ENCODE measurements at regions of chr6 and their contacts with region 1.

Region 1: DNA sequence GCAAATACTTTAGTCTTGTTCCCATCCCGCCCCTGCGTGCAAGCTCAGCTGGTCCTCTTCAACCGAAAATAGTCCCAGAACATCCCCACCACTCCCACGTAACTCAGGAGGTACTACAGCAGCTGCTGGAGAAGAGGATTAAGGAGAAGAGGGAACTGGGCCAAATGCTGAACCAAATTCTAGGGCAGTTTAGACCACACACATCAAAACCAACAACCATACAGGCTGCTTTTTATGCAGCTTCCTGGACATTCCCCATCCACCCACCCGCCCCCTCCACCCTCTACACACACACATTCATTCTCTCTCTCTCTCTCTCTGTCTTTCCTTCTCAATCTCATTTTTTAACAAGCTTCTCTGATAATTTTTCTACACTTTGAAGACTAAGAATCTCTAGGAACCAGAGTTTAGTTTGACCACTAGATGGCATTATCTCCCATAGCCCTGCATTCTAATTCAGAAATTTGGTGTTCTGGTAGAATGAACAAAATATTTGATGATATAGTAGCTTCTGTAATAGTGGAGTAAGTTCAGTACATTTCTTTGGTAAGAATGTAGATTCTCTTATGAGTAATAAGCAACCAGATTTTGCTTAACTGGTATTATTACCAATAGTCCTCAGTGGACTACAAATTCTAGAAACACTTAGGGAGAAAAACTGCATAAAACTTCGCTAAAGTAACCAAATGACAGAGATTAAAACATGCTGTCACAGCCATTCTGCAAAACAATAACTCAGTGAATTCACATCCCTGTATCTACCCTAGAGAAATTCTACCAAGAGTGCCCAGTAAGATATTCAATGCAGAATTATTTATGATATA is 52.1 kb upstream of the BEND6 start:
- DNase-seq: no peak
- H3K4me3 ChIP-seq: peak overlapping the region in 2 of 4 donors; percentile 16 to 26
- H3K27ac ChIP-seq: peak overlapping the region in 1 of 4 donors; percentile 9
- H3K4me1 ChIP-seq: peaks cover 0 to 14% (median 10%) of the 10 kb centered on the region in 4 donors
- H3K27me3 ChIP-seq: no peaks in the 10 kb centered on the region
- CTCF ChIP-seq: peak; percentile 48 to 78 (median 64)
- EP300 ChIP-seq: no peak
- POLR2A ChIP-seq: no peak

Region 2: DNA sequence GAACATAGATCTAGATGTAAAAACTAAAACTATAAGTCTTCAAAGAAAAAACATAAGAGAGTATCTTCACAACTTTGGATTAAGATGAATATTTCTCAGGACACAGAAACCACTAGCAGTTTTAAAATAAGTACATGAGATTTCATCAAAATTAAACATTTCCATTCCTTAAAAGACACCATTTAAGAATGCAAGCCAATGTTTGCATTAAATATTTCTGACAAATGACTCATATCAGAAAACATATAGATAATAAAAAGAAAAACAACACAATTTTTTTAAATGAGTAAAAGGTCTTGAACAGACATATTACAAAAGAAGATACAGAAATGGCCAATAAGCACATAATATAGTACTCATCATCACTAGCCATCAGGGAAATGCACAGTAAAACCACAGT is 715.2 kb before region 1 on chr6:
- intact Hi-C with region 1: no loop called
- DNase-seq: no peak
- H3K4me3 ChIP-seq: no peak overlapping the region
- H3K27ac ChIP-seq: no peak overlapping the region
- H3K4me1 ChIP-seq: no peaks in the 10 kb centered on the region
- H3K27me3 ChIP-seq: no peaks in the 10 kb centered on the region
- CTCF ChIP-seq: no peak
- EP300 ChIP-seq: no peak
- POLR2A ChIP-seq: no peak

Region 3: GRCh38 chr6:56843573-56844349 is 59.1 kb before region 1 on chr6:
- intact Hi-C with region 1: no loop called
- DNase-seq: no peak
- H3K4me3 ChIP-seq: peak overlapping the region; percentile 84 to 94 (median 90)
- H3K27ac ChIP-seq: peak overlapping the region; percentile 92 to 96 (median 94)
- H3K4me1 ChIP-seq: peaks cover 4 to 44% (median 35%) of the 10 kb centered on the region in 4 donors
- H3K27me3 ChIP-seq: no peaks in the 10 kb centered on the region
- CTCF ChIP-seq: peak in 2 of 3 experiments; percentile 73 to 74
- EP300 ChIP-seq: no peak
- POLR2A ChIP-seq: peak; percentile 64

Region 4: DNA sequence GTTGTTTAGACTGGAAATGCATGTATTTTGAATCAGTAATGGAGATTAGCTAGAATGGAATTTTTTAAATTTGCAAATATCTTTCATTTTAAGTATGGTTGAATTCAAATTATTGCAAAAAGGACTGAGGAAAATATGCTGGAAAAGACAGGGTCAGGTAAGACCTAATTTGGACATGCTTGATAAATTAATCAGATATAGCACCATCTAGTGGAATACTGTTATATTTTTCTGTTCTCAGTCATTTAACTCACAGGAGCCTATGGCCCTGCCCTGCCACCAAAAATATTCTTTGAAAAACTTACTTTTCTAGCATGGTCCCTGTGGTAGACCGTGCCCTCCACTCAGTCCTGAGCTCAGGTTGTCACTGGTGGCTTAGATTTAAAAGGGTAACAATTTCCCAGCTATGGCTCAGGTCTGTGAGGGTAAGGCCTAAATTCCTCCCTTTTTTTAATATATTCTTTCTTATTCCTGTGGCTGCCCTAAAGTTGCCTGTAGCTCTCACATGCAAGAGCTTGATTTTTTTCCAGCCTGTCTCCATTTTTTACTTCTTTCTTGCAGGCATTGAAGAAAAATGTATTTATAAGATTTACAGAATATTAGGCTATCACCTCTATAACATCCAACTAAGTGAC is 118.3 kb after region 1 on chr6:
- intact Hi-C with region 1: loop called (anchors 5 kb)
- DNase-seq: no peak
- H3K4me3 ChIP-seq: no peak overlapping the region
- H3K27ac ChIP-seq: no peak overlapping the region
- H3K4me1 ChIP-seq: no peaks in the 10 kb centered on the region
- H3K27me3 ChIP-seq: no peaks in the 10 kb centered on the region
- CTCF ChIP-seq: peak; percentile 38 to 64 (median 57)
- EP300 ChIP-seq: no peak
- POLR2A ChIP-seq: no peak

Region 5: GRCh38 chr6:57324538-57324937 is 421.7 kb after region 1 on chr6:
- intact Hi-C with region 1: loop called (anchors 5 kb)
- DNase-seq: no peak
- H3K4me3 ChIP-seq: no peak overlapping the region
- H3K27ac ChIP-seq: no peak overlapping the region
- H3K4me1 ChIP-seq: no peaks in the 10 kb centered on the region
- H3K27me3 ChIP-seq: no peaks in the 10 kb centered on the region
- CTCF ChIP-seq: peak; percentile 43 to 63 (median 52)
- EP300 ChIP-seq: no peak
- POLR2A ChIP-seq: no peak